Activated B cell treated with CpG ODN at 0.5 μM for 24 hours (primary cell): ENCODE measurements at regions of chr20 and their contacts with region 1.

Region 1: DNA sequence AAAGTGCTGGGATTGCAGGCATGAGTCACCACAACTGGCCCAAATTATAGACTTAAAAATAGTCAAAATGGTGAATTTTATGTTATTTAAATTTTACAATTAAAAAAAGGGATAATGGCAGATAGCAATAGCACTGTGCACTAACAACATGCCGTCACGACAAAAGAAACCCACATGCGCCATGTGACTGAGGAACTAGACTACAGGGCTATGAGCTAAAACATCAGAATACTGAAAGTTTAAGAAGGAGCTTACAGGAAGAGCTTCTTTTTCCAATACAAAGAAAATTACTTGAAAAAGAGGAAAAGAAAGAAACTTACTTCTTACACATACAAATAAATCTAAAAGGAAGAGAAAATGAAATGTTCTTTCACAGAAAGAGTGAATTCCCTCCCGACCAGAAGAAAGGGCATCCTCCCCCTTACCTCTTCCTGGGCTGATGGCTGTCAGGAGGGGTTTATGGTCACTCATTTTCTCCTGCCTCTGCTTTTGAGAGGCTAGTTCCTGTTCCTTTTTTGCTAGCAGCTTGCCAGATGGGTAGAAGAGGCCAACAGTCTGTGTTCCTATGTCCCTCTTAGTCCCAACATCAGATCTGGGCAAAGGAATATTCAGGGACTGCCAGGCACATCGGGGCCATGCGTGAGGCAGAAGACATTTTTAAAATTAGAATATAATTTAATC is 54.5 kb downstream of the DZANK1 start:
- DNase-seq: no peak
- ATAC-seq: peak; percentile 41
- H3K4me3 Mint-ChIP-seq: peak overlapping the region; percentile 69
- H3K27ac Mint-ChIP-seq: peak overlapping the region; percentile 88
- H3K4me1 Mint-ChIP-seq: peaks cover 18% of the 10 kb centered on the region
- H3K27me3 Mint-ChIP-seq: no peaks in the 10 kb centered on the region
- CTCF ChIP-seq: no peak

Region 2: DNA sequence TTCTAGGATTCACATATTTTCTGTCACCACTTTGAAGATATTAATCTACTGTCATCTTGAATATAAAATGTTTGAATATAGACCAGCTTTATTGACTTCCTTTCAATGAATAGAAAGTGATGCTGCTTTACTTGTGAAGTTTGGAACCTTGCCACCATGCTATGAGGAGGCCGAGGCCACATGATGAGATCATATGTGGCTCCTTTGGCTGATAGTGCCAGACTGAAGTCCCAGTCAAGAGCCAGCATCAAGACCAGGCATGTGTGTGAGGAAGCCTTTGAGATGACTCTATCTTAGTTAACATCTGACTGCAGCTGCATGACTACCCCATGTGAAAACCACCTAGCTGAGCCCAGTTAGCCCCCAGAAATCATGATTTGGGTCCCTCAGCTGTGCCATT is 1494.7 kb before region 1 on chr20:
- CTCF ChIA-PET with region 1: no interaction called
- POLR2A ChIA-PET with region 1: no interaction called
- intact Hi-C with region 1: no loop called
- DNase-seq: no peak
- ATAC-seq: no peak
- H3K4me3 Mint-ChIP-seq: no peak overlapping the region
- H3K27ac Mint-ChIP-seq: no peak overlapping the region
- H3K4me1 Mint-ChIP-seq: no peaks in the 10 kb centered on the region
- H3K27me3 Mint-ChIP-seq: peaks cover 2% of the 10 kb centered on the region
- CTCF ChIP-seq: no peak

Region 3: GRCh38 chr20:17504898-17505635 is 907.3 kb before region 1 on chr20:
- CTCF ChIA-PET with region 1: no interaction called
- POLR2A ChIA-PET with region 1: no interaction called
- intact Hi-C with region 1: loop called (anchors 10 kb)
- DNase-seq: peak; percentile 51
- ATAC-seq: peak; percentile 84
- H3K4me3 Mint-ChIP-seq: peak overlapping the region; percentile 91
- H3K27ac Mint-ChIP-seq: peak overlapping the region; percentile 85
- H3K4me1 Mint-ChIP-seq: peaks cover 9% of the 10 kb centered on the region
- H3K27me3 Mint-ChIP-seq: peaks cover 12% of the 10 kb centered on the region
- CTCF ChIP-seq: peak; percentile 56

Region 4: GRCh38 chr20:18466894-18467730 is 54.8 kb after region 1 on chr20 and contains the starts of genes DZANK1 and POLR3F:
- CTCF ChIA-PET with region 1: interaction called, 4 read pairs
- POLR2A ChIA-PET with region 1: no interaction called
- intact Hi-C with region 1: loop called (anchors 1 kb)
- DNase-seq: peak; percentile 88
- ATAC-seq: peak; percentile 96
- H3K4me3 Mint-ChIP-seq: peak within 1 kb of the TSS; percentile 99
- H3K27ac Mint-ChIP-seq: peak within 1 kb of the TSS; percentile 95
- H3K4me1 Mint-ChIP-seq: peaks cover 27% of the 10 kb centered on the region
- H3K27me3 Mint-ChIP-seq: no peaks in the 10 kb centered on the region
- CTCF ChIP-seq: no peak
- total RNA-seq, gene DZANK1: 5.3 and 6.0 TPM in 2 replicates
- total RNA-seq, gene POLR3F: 13.3 and 14.5 TPM in 2 replicates

Region 5: DNA sequence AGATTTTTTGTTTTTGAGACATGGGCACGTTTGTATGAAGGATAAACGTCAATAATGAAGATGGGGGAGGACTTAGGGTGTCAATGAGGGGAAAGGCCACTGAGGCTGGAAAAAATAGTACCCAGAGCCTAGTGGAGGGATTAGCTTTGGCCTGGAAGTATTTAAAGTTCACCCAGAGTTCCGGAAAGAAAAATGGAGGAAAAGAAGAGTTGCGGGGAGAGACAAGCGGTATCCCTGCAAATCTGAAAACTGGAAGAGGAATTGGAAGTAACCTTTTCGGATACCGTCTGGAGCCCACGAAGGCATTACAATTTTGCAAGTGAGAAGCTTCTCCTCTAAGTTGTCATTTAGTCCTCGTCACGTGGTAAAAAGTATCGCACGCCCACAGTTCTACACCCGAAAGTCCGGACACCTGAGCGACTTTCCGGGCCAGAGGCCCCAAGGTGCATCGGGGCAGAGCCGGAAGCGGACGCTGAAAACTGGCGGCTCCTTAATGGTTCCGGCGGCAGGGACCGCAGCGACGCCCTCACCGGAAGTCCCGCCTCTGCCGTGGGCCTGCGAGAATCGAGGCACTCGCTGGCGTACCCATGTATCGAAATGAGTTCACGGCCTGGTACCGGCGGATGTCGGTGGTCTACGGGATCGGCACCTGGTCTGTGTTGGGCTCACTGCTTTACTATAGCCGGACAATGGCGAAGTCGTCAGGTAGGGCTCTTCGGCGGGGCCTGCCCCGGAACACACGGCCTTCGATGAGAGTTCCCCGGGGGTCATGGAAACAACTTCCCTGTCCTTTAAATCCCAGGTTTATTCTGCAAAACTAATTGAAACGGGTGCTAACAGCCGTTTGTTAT is 154.8 kb after region 1 on chr20 and contains the start of gene SMIM26:
- CTCF ChIA-PET with region 1: interaction called, 4 read pairs
- POLR2A ChIA-PET with region 1: no interaction called
- intact Hi-C with region 1: loop called (anchors 1 kb)
- DNase-seq: peak; percentile 91
- ATAC-seq: peak; percentile 96
- H3K4me3 Mint-ChIP-seq: peak within 1 kb of the TSS; percentile 94
- H3K27ac Mint-ChIP-seq: peak within 1 kb of the TSS; percentile 94
- H3K4me1 Mint-ChIP-seq: peaks cover 23% of the 10 kb centered on the region
- H3K27me3 Mint-ChIP-seq: no peaks in the 10 kb centered on the region
- CTCF ChIP-seq: no peak
- total RNA-seq, gene SMIM26: 48.9 and 51.7 TPM in 2 replicates

Region 6: GRCh38 chr20:18632196-18633009 is 220.0 kb after region 1 on chr20:
- CTCF ChIA-PET with region 1: interaction called, 3 read pairs
- POLR2A ChIA-PET with region 1: no interaction called
- intact Hi-C with region 1: loop called (anchors 1 kb)
- DNase-seq: peak; percentile 40
- ATAC-seq: peak; percentile 98
- H3K4me3 Mint-ChIP-seq: no peak overlapping the region
- H3K27ac Mint-ChIP-seq: no peak overlapping the region
- H3K4me1 Mint-ChIP-seq: no peaks in the 10 kb centered on the region
- H3K27me3 Mint-ChIP-seq: no peaks in the 10 kb centered on the region
- CTCF ChIP-seq: peak; percentile 77

Region 7: GRCh38 chr20:19056909-19057308 is 644.5 kb after region 1 on chr20:
- CTCF ChIA-PET with region 1: interaction called, 3 read pairs
- POLR2A ChIA-PET with region 1: no interaction called
- intact Hi-C with region 1: loop called (anchors 5 kb)
- DNase-seq: no peak
- ATAC-seq: no peak
- H3K4me3 Mint-ChIP-seq: no peak overlapping the region
- H3K27ac Mint-ChIP-seq: no peak overlapping the region
- H3K4me1 Mint-ChIP-seq: no peaks in the 10 kb centered on the region
- H3K27me3 Mint-ChIP-seq: no peaks in the 10 kb centered on the region
- CTCF ChIP-seq: no peak

Region 8: DNA sequence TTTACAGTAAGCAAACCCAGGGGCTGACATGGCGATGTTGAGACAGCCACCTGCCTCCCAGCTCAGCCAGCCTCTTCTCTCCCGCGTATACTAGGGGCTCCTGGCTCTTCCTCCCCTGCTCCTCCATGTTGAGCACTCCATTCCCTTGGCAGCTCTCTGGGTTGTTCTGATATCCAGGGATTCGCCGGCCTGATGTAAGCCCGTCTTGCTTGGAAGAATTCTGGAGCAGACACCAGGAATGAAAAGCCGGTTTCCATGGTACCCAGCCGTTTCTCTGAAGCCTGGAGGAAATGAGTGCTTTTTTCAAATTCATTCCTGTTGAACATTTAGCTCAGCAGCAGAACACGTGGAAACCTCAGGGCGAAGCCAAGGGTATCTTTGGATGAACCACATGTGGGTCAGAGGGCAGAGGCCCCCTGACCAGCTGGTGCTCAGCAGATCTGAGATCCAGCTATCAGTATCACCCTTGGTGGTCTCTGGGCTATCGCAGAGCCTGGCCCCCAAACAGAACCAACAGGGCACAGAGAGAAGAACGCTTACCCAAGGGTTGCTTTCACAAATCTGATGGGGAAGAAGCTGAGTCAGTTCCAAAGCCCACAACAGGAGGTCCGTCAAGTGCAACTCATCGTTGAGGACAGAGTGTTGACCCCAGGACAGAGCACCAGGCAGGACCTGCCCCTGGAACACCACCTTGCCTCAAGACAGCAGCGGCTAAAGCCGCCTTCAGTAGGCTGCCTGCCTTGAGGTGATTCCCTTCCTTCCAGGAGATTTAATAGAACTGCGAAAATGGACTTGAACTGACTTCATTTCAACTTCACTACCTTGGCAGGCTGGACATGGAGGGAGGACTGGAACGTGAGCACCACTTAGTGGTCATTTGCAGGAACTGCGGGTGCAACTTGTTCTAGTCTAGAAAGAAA is 1249.6 kb after region 1 on chr20:
- CTCF ChIA-PET with region 1: no interaction called
- POLR2A ChIA-PET with region 1: no interaction called
- intact Hi-C with region 1: loop called (anchors 1 kb)
- DNase-seq: peak; percentile 28
- ATAC-seq: peak; percentile 38
- H3K4me3 Mint-ChIP-seq: no peak overlapping the region
- H3K27ac Mint-ChIP-seq: no peak overlapping the region
- H3K4me1 Mint-ChIP-seq: peaks cover 32% of the 10 kb centered on the region
- H3K27me3 Mint-ChIP-seq: peaks cover 21% of the 10 kb centered on the region
- CTCF ChIP-seq: peak; percentile 99